ENCODE measurements at regions of chr1 and their contacts with region 1.

Region 1: DNA sequence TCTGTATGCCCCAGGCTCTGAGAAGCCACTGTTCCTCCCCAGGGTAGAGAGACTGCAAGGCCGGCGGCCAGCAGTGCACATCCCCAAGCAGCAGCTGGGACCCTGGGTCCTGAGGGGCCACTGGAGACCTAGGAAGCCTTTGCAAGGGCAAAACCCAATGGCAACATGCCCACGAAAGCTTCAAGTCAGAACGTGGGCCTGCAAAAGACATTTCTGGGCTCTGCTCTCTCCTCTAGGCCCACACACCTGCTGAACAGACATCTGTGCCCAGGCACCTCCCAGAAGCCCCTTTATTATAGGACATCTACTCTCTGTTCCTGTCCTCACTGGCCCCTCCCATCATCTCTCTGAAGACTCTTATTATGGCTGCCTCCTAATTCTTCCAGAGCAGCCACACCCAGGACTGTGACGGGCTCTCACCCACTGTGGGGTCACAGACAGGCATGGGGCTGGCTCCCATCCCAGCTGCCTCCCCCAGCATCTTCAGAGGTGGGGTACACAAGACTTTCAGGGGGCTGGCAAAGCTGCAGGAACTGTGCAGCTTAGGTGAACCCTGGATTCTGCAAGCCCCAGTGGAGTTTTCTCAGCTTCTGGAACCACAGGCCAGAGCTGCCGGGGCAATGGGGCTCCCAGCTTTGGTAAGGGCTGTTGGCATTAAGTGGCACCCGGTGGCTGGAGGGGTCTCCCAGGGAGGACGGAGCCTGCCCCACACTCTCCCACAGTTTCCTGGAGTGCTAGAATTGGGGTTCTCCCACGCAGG is 12.6 kb downstream of the TRIM11 start:
- DNase-seq: no peak
- H3K4me3 Mint-ChIP-seq: no peak overlapping the region
- H3K27ac Mint-ChIP-seq: no peak overlapping the region
- H3K4me1 Mint-ChIP-seq: peaks cover 19% of the 10 kb centered on the region
- H3K27me3 Mint-ChIP-seq: no peaks in the 10 kb centered on the region

Region 2: DNA sequence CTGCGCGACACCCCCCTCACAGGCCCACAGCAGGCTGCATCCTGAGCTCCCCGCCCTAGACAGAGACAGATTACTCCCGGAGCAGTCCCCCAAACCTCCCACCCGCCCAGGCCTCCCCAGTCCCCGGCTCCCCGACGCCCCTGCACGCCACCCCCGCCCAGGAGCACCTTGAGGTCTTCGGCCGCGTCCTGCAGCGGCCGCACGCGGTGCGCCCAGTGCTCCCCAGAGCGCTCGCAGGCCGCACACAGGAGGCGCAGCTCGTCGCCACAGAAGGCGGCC is 11.9 kb after region 1 on chr1:
- CTCF ChIA-PET with region 1: interaction called, 4 read pairs
- POLR2A ChIA-PET with region 1: interaction called, 13 read pairs
- DNase-seq: no peak
- H3K4me3 Mint-ChIP-seq: peak overlapping the region; percentile 85
- H3K27ac Mint-ChIP-seq: peak overlapping the region; percentile 90
- H3K4me1 Mint-ChIP-seq: peaks cover 61% of the 10 kb centered on the region
- H3K27me3 Mint-ChIP-seq: no peaks in the 10 kb centered on the region

Measured in activated CD4-positive, alpha-beta memory T cell treated with anti-CD3 and anti-CD28 coated beads, Interleukin-2, amount 10 ng/mL, durations not matched to agents 7 days and 5 days (primary cell).